ENCODE measurements at regions of chr12 and their contacts with region 1.

Region 1: DNA sequence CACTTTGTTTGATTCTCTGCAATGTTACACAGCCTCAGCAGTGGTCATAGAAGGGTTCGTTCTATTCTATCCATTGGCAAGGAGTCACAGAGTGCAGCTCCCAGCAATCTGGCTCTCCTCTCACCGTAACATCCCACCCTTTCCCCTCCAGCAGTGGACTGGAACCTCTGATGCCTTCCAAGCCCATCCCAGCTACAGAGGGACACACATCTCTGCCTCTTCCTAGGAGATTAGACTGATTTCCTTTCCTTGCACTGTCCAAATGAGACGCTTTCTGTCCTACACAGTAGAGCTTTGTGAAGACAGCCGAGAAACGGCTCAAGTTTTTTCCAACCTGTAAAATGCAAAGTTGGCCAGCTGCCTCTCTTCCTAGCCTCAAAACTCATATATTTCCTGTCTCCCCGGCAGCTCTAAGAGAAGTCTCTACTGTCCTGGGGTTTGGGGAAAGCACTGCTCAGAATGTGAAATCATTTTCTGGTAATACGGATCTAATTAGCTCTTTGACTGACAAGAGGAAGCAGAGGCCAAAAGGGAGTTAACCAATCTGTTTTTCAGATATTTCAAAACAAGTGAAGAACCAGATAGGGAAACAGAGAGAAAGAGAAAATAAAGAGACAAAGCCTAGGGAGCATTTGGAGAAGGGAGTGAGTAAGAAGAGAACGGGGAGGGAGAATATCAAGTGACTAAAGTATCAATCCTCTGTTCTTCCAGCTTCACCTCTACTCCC is 516 bp downstream of the NINJ2 start:
- DNase-seq: no peak
- ATAC-seq: peak in 3 of 4 donors; percentile 25 to 27 (median 26)
- H3K4me3 ChIP-seq: no peak overlapping the region
- H3K27ac ChIP-seq: peak overlapping the region in 1 of 3 donors; percentile 11
- H3K4me1 ChIP-seq: peaks cover 0 to 21% (median 1%) of the 10 kb centered on the region in 4 donors
- H3K27me3 ChIP-seq: no peaks in the 10 kb centered on the region
- CTCF ChIP-seq: no peak
- POLR2A ChIP-seq: no peak

Region 2: GRCh38 chr12:737122-737739 is 74.5 kb after region 1 on chr12:
- intact Hi-C with region 1: loop called in 1 of 2 experiments (anchors 10 kb)
- DNase-seq: no peak
- ATAC-seq: no peak
- H3K4me3 ChIP-seq: no peak overlapping the region
- H3K27ac ChIP-seq: no peak overlapping the region
- H3K4me1 ChIP-seq: no peaks in the 10 kb centered on the region
- H3K27me3 ChIP-seq: no peaks in the 10 kb centered on the region
- CTCF ChIP-seq: no peak
- POLR2A ChIP-seq: no peak

Region 3: GRCh38 chr12:761256-761655 is 98.5 kb after region 1 on chr12:
- intact Hi-C with region 1: no loop called
- DNase-seq: no peak
- ATAC-seq: no peak
- H3K4me3 ChIP-seq: no peak overlapping the region
- H3K27ac ChIP-seq: no peak overlapping the region
- H3K4me1 ChIP-seq: peaks cover 0 to 25% (median 7%) of the 10 kb centered on the region in 4 donors
- H3K27me3 ChIP-seq: no peaks in the 10 kb centered on the region
- CTCF ChIP-seq: no peak
- POLR2A ChIP-seq: no peak